ENCODE measurements at regions of chr3 and their contacts with region 1.

Region 1: DNA sequence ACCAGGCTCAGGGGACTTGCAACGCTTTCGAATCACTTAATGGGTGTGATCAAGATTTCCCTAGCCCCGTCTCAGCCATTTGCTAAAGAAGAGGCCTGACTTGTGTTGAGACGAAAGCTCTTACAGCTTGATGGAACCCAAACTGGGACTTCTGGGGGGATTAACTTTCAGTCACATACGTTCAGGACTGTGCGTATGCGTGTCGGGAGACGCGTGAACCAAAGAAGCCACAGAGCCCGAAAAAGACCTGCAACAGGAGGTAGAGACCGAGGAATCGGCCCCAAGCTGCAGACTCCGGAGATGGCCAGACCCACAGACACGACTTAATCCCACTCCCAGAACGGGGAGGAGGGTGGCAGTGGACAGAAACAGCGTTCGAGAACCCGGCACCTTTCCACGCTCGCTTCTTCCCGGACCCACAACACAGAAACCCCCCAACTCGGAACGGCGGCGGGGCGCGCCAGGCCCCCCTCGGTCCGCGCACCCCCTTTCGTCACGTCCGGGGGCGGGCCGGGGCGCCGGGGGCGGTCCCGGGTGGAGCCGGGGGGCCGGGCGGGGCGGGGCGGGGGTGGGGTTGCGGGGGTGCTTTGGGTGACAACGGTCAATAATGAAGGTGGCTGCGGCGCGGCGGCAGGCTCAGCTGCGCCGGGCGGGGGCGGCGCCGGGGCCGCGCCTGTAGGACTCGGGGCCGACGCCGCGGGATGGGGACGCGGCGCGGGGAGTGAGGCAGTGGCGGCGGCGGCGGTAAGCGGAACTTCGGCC is at the start of gene ATP11B:
- DNase-seq: no peak
- ATAC-seq: peak; percentile 69
- H3K4me3 ChIP-seq: peak within 1 kb of the TSS; percentile 90
- H3K27ac ChIP-seq: peak within 1 kb of the TSS; percentile 96
- H3K4me1 ChIP-seq: peaks cover 15% of the 10 kb centered on the region
- H3K27me3 ChIP-seq: no peaks in the 10 kb centered on the region
- CTCF ChIP-seq: no peak
- EP300 ChIP-seq: no peak
- POLR2A ChIP-seq: peak; percentile 91
- RAD21 ChIP-seq: no peak
- polyA plus RNA-seq, gene ATP11B: 10.3 to 11.3 TPM

Region 2: GRCh38 chr3:182583545-182583944 is 209.5 kb before region 1 on chr3:
- CTCF ChIA-PET with region 1: no interaction called
- POLR2A ChIA-PET with region 1: no interaction called
- RAD21 ChIA-PET with region 1: no interaction called
- SMC1A ChIA-PET with region 1: no interaction called
- in situ Hi-C with region 1: no loop called
- intact Hi-C with region 1: no loop called
- DNase-seq: no peak
- ATAC-seq: no peak
- H3K4me3 ChIP-seq: no peak overlapping the region
- H3K27ac ChIP-seq: no peak overlapping the region
- H3K4me1 ChIP-seq: no peaks in the 10 kb centered on the region
- H3K27me3 ChIP-seq: no peaks in the 10 kb centered on the region
- CTCF ChIP-seq: no peak
- EP300 ChIP-seq: no peak
- POLR2A ChIP-seq: no peak
- RAD21 ChIP-seq: no peak

Region 3: GRCh38 chr3:182729903-182730674 is 63.0 kb before region 1 on chr3:
- CTCF ChIA-PET with region 1: interaction called, 4 read pairs
- POLR2A ChIA-PET with region 1: interaction called, 20 read pairs
- RAD21 ChIA-PET with region 1: interaction called, 18 read pairs
- SMC1A ChIA-PET with region 1: interaction called, 26 read pairs
- in situ Hi-C with region 1: no loop called
- intact Hi-C with region 1: loop called (anchors 2 kb)
- DNase-seq: peak; percentile 68
- ATAC-seq: peak; percentile 86
- H3K4me3 ChIP-seq: peak overlapping the region; percentile 65
- H3K27ac ChIP-seq: peak overlapping the region; percentile 90
- H3K4me1 ChIP-seq: peaks cover 8% of the 10 kb centered on the region
- H3K27me3 ChIP-seq: no peaks in the 10 kb centered on the region
- CTCF ChIP-seq: no peak
- EP300 ChIP-seq: peak; percentile 26 to 51; a peak in 1 of 4 replicates
- POLR2A ChIP-seq: no peak
- RAD21 ChIP-seq: 0 out of 2 replicates have a peak, but pooled peaks have one; percentile 10

Region 4: GRCh38 chr3:182782149-182782548 is 10.9 kb before region 1 on chr3:
- CTCF ChIA-PET with region 1: no interaction called
- POLR2A ChIA-PET with region 1: interaction called, 7 read pairs
- RAD21 ChIA-PET with region 1: interaction called, 3 read pairs
- SMC1A ChIA-PET with region 1: interaction called, 17 read pairs
- in situ Hi-C with region 1: no loop called
- intact Hi-C with region 1: no loop called
- DNase-seq: no peak
- ATAC-seq: peak; percentile 66
- H3K4me3 ChIP-seq: no peak overlapping the region
- H3K27ac ChIP-seq: no peak overlapping the region
- H3K4me1 ChIP-seq: peaks cover 6% of the 10 kb centered on the region; the same call in 1 of the 2 replicates
- H3K27me3 ChIP-seq: no peaks in the 10 kb centered on the region; a peak in 2 of 4 replicates
- CTCF ChIP-seq: no peak
- EP300 ChIP-seq: peak in 1 of 2 experiments; percentile 16; a peak in 1 of 4 replicates
- POLR2A ChIP-seq: no peak
- RAD21 ChIP-seq: no peak

Region 5: DNA sequence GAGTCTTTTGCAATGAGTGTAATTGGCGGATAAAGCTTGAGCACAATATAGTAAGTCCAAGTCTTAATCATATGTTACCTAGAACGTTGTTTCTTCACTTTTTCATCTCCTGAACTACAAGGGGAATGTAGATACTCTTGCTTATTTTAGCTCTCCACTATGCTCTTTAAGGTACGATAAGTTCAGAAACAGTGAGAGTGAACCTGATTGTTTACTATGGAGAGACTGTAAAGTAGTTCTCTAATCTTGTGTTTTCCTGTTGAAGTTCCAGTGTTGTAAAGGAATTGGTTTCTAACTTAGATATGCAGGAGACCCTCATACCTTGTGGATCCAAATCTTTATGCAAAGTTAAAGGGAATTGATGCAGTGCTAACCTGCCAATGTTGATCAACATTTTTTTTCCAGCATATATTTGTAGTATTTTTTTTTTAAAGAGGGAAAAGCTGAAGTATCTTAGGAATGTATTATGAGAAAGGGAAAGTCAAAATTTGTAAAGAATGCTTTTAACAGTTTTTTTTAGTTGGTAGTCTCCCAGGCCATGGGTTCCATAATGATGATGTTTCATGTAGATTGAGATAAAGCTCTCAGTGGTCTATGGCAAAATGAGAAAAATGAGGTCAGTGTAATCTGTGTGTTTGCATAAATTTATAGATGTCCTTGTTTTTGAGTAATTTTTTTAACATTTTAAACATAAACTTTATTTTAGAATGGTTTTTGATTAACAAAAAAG is 15.1 kb after region 1 on chr3:
- CTCF ChIA-PET with region 1: interaction called, 12 read pairs
- POLR2A ChIA-PET with region 1: interaction called, 9 read pairs
- RAD21 ChIA-PET with region 1: interaction called, 4 read pairs
- SMC1A ChIA-PET with region 1: interaction called, 6 read pairs
- in situ Hi-C with region 1: no loop called
- intact Hi-C with region 1: no loop called
- DNase-seq: no peak
- ATAC-seq: no peak
- H3K4me3 ChIP-seq: no peak overlapping the region
- H3K27ac ChIP-seq: no peak overlapping the region
- H3K4me1 ChIP-seq: no peaks in the 10 kb centered on the region
- H3K27me3 ChIP-seq: no peaks in the 10 kb centered on the region
- CTCF ChIP-seq: no peak
- EP300 ChIP-seq: no peak
- POLR2A ChIP-seq: no peak
- RAD21 ChIP-seq: no peak

Region 6: GRCh38 chr3:182814419-182815062 is 21.5 kb after region 1 on chr3:
- CTCF ChIA-PET with region 1: no interaction called
- POLR2A ChIA-PET with region 1: interaction called, 8 read pairs
- RAD21 ChIA-PET with region 1: interaction called, 6 read pairs
- SMC1A ChIA-PET with region 1: interaction called, 13 read pairs
- in situ Hi-C with region 1: no loop called
- intact Hi-C with region 1: no loop called
- DNase-seq: no peak
- ATAC-seq: no peak
- H3K4me3 ChIP-seq: no peak overlapping the region
- H3K27ac ChIP-seq: no peak overlapping the region
- H3K4me1 ChIP-seq: no peaks in the 10 kb centered on the region
- H3K27me3 ChIP-seq: no peaks in the 10 kb centered on the region
- CTCF ChIP-seq: no peak
- EP300 ChIP-seq: no peak
- POLR2A ChIP-seq: no peak
- RAD21 ChIP-seq: no peak

Region 7: GRCh38 chr3:183410280-183410679 is 617.2 kb after region 1 on chr3:
- CTCF ChIA-PET with region 1: no interaction called
- POLR2A ChIA-PET with region 1: no interaction called
- RAD21 ChIA-PET with region 1: no interaction called
- SMC1A ChIA-PET with region 1: no interaction called
- in situ Hi-C with region 1: no loop called
- intact Hi-C with region 1: no loop called
- DNase-seq: no peak
- ATAC-seq: no peak
- H3K4me3 ChIP-seq: no peak overlapping the region
- H3K27ac ChIP-seq: no peak overlapping the region
- H3K4me1 ChIP-seq: no peaks in the 10 kb centered on the region
- H3K27me3 ChIP-seq: no peaks in the 10 kb centered on the region
- CTCF ChIP-seq: no peak
- EP300 ChIP-seq: no peak
- POLR2A ChIP-seq: no peak
- RAD21 ChIP-seq: no peak

Measured in GM12878 (cell line).